T-cell (primary cell): ENCODE measurements at regions of chr2 and their contacts with region 1.

Region 1: DNA sequence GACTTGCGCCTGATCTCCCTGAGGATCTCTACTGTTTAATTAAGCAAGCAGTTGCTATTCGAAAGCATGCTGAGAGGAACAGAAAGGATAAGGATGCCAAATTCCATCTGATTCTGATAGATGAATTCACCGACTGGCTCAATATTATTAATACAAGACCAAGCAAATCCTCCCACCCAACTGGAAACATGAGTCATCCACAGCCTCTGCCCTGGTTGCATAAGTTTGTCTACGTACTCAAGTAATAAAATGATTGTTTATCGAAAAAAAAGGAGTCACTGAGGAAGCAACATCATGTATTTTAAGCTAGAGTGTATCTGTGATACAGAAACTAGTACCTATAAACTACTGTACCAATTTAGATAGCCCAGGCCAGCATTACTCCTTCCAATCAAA is 26.0 kb downstream of the ATAD2B start:
- DNase-seq: no peak
- ATAC-seq: no peak
- H3K4me3 ChIP-seq: no peak overlapping the region
- H3K4me3 Mint-ChIP-seq: no peak overlapping the region
- H3K27ac ChIP-seq: no peak overlapping the region
- H3K27ac Mint-ChIP-seq: no peak overlapping the region
- H3K4me1 ChIP-seq: peaks cover 0 to 8% of the 10 kb centered on the region in 2 experiments
- H3K4me1 Mint-ChIP-seq: peaks cover 56 to 58% (median 57%) of the 10 kb centered on the region in 3 donors
- H3K27me3 ChIP-seq: no peaks in the 10 kb centered on the region
- H3K27me3 Mint-ChIP-seq: no peaks in the 10 kb centered on the region

Region 2: GRCh38 chr2:23268467-23269263 is 632.3 kb before region 1 on chr2:
- CTCF ChIA-PET with region 1: no interaction called
- POLR2A ChIA-PET with region 1: no interaction called
- DNase-seq: no peak
- ATAC-seq: no peak
- H3K4me3 ChIP-seq: no peak overlapping the region
- H3K4me3 Mint-ChIP-seq: no peak overlapping the region
- H3K27ac ChIP-seq: no peak overlapping the region
- H3K27ac Mint-ChIP-seq: no peak overlapping the region
- H3K4me1 ChIP-seq: no peaks in the 10 kb centered on the region
- H3K4me1 Mint-ChIP-seq: no peaks in the 10 kb centered on the region
- H3K27me3 ChIP-seq: peaks cover 3 to 4% of the 10 kb centered on the region in 2 experiments
- H3K27me3 Mint-ChIP-seq: peaks cover 4 to 21% of the 10 kb centered on the region in 2 donors

Region 3: GRCh38 chr2:23606968-23607367 is 294.0 kb before region 1 on chr2:
- CTCF ChIA-PET with region 1: no interaction called
- POLR2A ChIA-PET with region 1: no interaction called
- DNase-seq: no peak
- ATAC-seq: no peak
- H3K4me3 ChIP-seq: no peak overlapping the region
- H3K4me3 Mint-ChIP-seq: no peak overlapping the region
- H3K27ac ChIP-seq: no peak overlapping the region
- H3K27ac Mint-ChIP-seq: no peak overlapping the region
- H3K4me1 ChIP-seq: no peaks in the 10 kb centered on the region
- H3K4me1 Mint-ChIP-seq: peaks cover 0 to 10% (median 2%) of the 10 kb centered on the region in 3 donors
- H3K27me3 ChIP-seq: peaks cover 0 to 40% of the 10 kb centered on the region in 2 experiments
- H3K27me3 Mint-ChIP-seq: peaks cover 10 to 14% of the 10 kb centered on the region in 2 donors

Region 4: GRCh38 chr2:24009680-24010476 is 109.0 kb after region 1 on chr2 and contains the start of gene MFSD2B:
- CTCF ChIA-PET with region 1: no interaction called
- POLR2A ChIA-PET with region 1: no interaction called
- DNase-seq: no peak
- ATAC-seq: peak; percentile 19 to 29 (median 21)
- H3K4me3 ChIP-seq: peak within 1 kb of the TSS in 1 of 2 donors; percentile 39
- H3K4me3 Mint-ChIP-seq: peak within 1 kb of the TSS in 1 of 3 donors; percentile 19
- H3K27ac ChIP-seq: no peak within 1 kb of the TSS
- H3K27ac Mint-ChIP-seq: no peak within 1 kb of the TSS
- H3K4me1 ChIP-seq: peaks cover 2 to 15% of the 10 kb centered on the region in 2 experiments
- H3K4me1 Mint-ChIP-seq: peaks cover 0 to 9% (median 3%) of the 10 kb centered on the region in 3 donors
- H3K27me3 ChIP-seq: peaks cover 3 to 37% of the 10 kb centered on the region in 2 experiments
- H3K27me3 Mint-ChIP-seq: peaks cover 21 to 40% of the 10 kb centered on the region in 2 donors
- total RNA-seq, gene MFSD2B: 0.19 to 0.29 (median 0.21) TPM in 3 of 5 donors, not detected in the others

Region 5: DNA sequence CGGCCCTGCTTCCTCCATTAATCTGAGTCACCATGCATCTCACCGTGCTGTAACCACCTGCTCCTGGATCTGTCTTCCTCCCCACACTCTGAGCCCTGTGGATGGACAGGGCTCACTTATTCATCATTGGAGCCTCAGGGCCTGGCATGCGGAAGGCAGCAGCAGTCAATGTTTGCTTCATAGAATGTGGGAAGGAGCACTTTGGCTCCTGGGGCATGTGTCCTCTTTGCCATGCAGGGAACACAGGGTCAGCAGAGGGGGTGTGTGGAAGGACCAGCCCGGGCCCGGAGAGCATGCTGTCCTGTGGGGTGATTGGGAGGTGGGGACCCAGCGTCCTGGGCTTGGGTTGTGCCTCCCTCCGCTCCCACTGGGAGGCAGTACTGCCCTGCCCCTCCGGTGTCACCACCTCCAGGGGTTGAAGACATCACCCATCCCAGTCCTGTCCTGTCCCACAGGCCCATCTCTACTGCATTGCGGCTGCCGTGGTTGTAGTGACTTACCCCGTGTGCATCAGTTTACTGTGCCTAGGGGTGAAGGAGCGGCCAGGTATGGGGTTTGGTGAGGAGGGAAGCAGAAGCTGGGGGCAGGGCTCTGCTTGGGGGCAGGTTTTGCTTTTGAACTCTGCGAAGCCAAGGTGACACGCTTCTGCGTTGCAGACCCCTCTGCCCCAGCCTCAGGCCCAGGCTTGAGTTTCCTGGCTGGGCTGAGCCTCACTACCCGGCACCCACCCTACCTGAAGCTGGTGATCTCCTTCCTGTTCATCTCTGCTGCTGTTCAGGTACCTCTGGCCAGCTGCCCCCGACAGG is 120.5 kb after region 1 on chr2:
- CTCF ChIA-PET with region 1: interaction called in 1 of 2 experiments, 10 read pairs
- POLR2A ChIA-PET with region 1: no interaction called
- DNase-seq: peak in 3 of 35 experiments; percentile 3 to 20 (median 9)
- ATAC-seq: no peak
- H3K4me3 ChIP-seq: no peak overlapping the region
- H3K4me3 Mint-ChIP-seq: no peak overlapping the region
- H3K27ac ChIP-seq: no peak overlapping the region
- H3K27ac Mint-ChIP-seq: no peak overlapping the region
- H3K4me1 ChIP-seq: no peaks in the 10 kb centered on the region
- H3K4me1 Mint-ChIP-seq: no peaks in the 10 kb centered on the region
- H3K27me3 ChIP-seq: peaks cover 0 to 2% of the 10 kb centered on the region in 2 experiments
- H3K27me3 Mint-ChIP-seq: no peaks in the 10 kb centered on the region

Region 6: GRCh38 chr2:25618642-25619037 is 1717.7 kb after region 1 on chr2:
- CTCF ChIA-PET with region 1: no interaction called
- POLR2A ChIA-PET with region 1: no interaction called
- DNase-seq: no peak
- ATAC-seq: no peak
- H3K4me3 ChIP-seq: no peak overlapping the region
- H3K4me3 Mint-ChIP-seq: no peak overlapping the region
- H3K27ac ChIP-seq: no peak overlapping the region
- H3K27ac Mint-ChIP-seq: no peak overlapping the region
- H3K4me1 ChIP-seq: no peaks in the 10 kb centered on the region
- H3K4me1 Mint-ChIP-seq: no peaks in the 10 kb centered on the region
- H3K27me3 ChIP-seq: no peaks in the 10 kb centered on the region
- H3K27me3 Mint-ChIP-seq: no peaks in the 10 kb centered on the region